Breast epithelium (tissue), 4 donors: ENCODE measurements at regions of chr3 and their contacts with region 1.

Region 1: DNA sequence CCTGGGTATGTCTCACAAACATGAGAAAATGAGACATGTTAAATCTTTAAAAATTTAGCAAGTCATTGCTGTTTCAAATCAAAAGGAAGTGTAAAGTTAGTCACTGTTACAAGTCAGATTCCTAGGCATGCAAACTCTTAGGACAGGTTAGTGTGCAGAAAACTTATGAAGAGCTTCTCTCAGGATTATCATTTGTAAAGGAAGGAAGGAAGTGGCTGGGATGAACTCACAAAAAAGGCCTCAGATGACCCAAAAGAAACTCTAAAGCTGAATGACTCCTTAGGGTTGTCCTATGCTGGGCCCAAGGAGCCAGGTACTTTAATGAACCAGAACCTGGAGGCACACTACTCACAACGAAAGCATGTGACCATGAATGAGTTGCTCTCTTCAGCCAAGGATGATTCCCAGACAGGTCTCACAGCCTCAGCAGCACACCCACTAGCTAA is 25.0 kb downstream of the MSL2 start:
- DNase-seq: no peak
- H3K4me3 ChIP-seq: no peak overlapping the region
- H3K27ac ChIP-seq: no peak overlapping the region
- H3K4me1 ChIP-seq: no peaks in the 10 kb centered on the region
- H3K27me3 ChIP-seq: no peaks in the 10 kb centered on the region
- CTCF ChIP-seq: no peak
- POLR2A ChIP-seq: no peak

Region 2: GRCh38 chr3:138157743-138158142 is 1986.6 kb after region 1 on chr3:
- intact Hi-C with region 1: loop called (anchors 10 kb)
- DNase-seq: no peak
- H3K4me3 ChIP-seq: no peak overlapping the region
- H3K27ac ChIP-seq: no peak overlapping the region
- H3K4me1 ChIP-seq: no peaks in the 10 kb centered on the region
- H3K27me3 ChIP-seq: no peaks in the 10 kb centered on the region
- CTCF ChIP-seq: no peak
- POLR2A ChIP-seq: no peak